Activated T-helper 1 cell treated with anti-CD3 and anti-CD28 coated beads, Interleukin-12 subunit alpha, Interleukin-12 subunit beta, Interleukin-2, Interleukin-4 antibody, amounts not matched to agents 30 ng/mL and 10 ng/mL and 1 ng/mL, durations not matched to agents 14 hours and 24 hours and 36 hours (primary cell): ENCODE measurements at regions of chr11 and their contacts with region 1.

Region 1: DNA sequence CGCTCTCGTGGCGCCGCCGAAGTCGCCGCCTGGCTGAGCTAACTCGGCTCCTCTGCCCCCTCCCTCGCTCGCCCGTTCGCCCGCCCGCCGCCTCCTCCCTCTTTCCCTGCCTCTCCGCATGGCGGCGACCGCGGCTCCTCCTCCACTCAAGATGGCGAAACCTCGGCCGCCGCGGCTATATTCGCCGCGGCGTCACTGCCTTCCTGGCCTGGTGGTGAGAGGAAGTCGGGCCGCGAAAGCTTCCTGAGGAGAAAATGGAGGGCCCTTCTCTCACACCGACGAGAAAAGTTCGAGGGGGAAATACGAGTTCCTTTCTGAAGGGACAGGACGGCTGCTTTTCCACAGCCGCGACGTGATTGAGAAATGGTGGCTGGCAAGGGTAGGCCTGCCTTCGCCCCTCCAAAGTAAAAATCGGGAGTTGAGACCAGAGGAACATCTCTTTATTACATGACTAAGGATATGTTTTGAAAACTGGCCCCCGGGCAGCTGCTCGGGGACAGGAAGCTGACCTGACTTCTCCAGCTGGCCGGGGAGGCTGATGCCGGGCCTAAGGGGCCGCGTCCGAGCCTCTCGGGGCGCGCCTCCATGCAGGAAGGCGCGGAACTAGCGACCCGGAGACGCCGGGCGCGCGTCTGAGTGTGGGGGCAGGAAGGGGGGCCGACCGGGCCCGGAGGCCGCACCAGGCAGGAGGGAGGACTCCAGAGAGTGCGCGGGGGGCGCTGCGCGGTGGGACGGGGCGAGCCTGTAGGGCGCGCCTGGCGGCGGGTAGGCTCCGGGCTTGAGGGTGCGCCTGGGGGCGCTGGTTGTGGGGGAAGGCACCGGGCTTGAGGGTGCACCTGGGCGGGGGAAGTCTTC is at the start of gene DDX6:
- DNase-seq: peak; percentile 85
- H3K4me3 Mint-ChIP-seq: peak within 1 kb of the TSS; percentile 98
- H3K27ac Mint-ChIP-seq: peak within 1 kb of the TSS; percentile 99
- H3K4me1 Mint-ChIP-seq: peaks cover 29% of the 10 kb centered on the region
- H3K27me3 Mint-ChIP-seq: no peaks in the 10 kb centered on the region
- total RNA-seq, gene DDX6: 110 and 112 TPM in 2 replicates

Region 2: DNA sequence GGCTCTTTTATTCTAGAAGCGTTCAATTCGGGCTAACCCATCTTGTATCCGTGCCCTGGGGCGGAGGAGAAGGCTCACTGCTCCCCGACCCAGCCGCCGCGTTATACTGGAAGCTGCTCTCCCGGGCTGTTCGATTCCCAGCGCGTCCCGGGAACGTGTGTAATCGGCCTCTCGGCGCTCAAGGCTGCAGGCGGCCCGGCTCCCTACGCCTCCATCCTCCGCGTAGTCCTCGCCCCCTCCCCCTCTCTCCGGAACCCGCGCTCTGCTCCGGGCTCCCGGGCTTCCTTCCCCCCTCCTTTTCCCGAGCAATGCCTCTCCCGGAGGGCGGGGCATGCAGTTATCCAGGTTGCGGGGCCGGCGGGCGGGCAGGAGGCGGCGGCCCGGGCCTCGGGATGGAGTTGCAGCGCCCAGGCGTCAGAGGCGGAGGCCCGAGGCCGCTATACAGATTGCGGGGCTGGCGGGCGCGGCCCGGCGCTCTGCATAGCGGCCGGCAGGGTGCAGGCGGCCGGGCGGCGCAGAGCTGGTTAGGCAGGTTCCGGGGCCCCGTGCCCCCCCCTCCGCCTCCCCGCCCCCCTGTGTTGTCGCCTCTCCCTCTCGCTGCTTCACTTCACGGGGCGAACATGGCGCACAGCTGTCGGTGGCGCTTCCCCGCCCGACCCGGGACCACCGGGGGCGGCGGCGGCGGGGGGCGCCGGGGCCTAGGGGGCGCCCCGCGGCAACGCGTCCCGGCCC is 355.3 kb before region 1 on chr11 and contains the start of gene KMT2A:
- intact Hi-C with region 1: loop called (anchors 5 kb)
- DNase-seq: peak; percentile 92
- H3K4me3 Mint-ChIP-seq: peak within 1 kb of the TSS; percentile 91
- H3K27ac Mint-ChIP-seq: peak within 1 kb of the TSS; percentile 89
- H3K4me1 Mint-ChIP-seq: peaks cover 45% of the 10 kb centered on the region
- H3K27me3 Mint-ChIP-seq: peaks cover 3% of the 10 kb centered on the region
- total RNA-seq, gene KMT2A: 78.4 and 87.8 TPM in 2 replicates

Region 3: DNA sequence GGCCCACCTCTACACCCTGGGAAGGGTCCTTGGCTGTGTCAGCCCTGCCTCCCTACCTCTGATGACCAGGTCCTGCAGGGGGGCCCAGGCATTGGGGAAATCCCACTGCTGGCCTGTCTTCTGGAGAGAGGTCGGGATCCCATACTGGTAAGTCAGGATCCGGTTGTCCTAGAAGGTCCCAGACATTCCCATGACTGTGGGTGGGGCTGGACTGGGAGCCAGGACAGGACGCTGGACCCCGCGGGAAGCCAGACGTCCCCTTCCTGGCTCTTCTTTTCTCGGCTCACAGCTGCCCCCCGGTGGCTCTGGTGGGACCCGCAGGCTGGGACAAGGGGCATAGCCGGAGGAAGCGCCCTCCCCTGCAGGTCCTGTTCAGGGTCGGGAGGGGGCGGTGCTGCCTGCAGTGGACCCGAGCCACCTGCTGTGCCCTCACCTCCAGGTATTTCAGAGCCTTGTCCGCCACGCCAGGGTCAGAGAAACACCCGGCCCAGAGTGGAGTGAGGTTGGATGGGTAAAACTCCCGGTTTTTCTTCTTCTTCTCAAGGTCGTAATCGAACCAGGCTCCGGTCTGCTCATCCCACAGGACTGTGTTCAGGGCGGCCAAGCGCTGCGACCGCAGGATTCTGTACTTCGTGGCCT is 131.9 kb before region 1 on chr11:
- intact Hi-C with region 1: no loop called
- DNase-seq: peak; percentile 74
- H3K4me3 Mint-ChIP-seq: no peak overlapping the region
- H3K27ac Mint-ChIP-seq: no peak overlapping the region
- H3K4me1 Mint-ChIP-seq: no peaks in the 10 kb centered on the region
- H3K27me3 Mint-ChIP-seq: peaks cover 9% of the 10 kb centered on the region

Region 4: GRCh38 chr11:118689851-118690552 is 101.3 kb before region 1 on chr11:
- intact Hi-C with region 1: loop called (anchors 2 kb)
- DNase-seq: peak; percentile 72
- H3K4me3 Mint-ChIP-seq: peak overlapping the region; percentile 60
- H3K27ac Mint-ChIP-seq: peak overlapping the region; percentile 52
- H3K4me1 Mint-ChIP-seq: peaks cover 36% of the 10 kb centered on the region
- H3K27me3 Mint-ChIP-seq: peaks cover 10% of the 10 kb centered on the region

Region 5: GRCh38 chr11:118870396-118871345 is 79.3 kb after region 1 on chr11:
- intact Hi-C with region 1: loop called (anchors 1 kb)
- DNase-seq: no peak
- H3K4me3 Mint-ChIP-seq: peak overlapping the region; percentile 75
- H3K27ac Mint-ChIP-seq: peak overlapping the region; percentile 96
- H3K4me1 Mint-ChIP-seq: peaks cover 51% of the 10 kb centered on the region
- H3K27me3 Mint-ChIP-seq: no peaks in the 10 kb centered on the region

Region 6: DNA sequence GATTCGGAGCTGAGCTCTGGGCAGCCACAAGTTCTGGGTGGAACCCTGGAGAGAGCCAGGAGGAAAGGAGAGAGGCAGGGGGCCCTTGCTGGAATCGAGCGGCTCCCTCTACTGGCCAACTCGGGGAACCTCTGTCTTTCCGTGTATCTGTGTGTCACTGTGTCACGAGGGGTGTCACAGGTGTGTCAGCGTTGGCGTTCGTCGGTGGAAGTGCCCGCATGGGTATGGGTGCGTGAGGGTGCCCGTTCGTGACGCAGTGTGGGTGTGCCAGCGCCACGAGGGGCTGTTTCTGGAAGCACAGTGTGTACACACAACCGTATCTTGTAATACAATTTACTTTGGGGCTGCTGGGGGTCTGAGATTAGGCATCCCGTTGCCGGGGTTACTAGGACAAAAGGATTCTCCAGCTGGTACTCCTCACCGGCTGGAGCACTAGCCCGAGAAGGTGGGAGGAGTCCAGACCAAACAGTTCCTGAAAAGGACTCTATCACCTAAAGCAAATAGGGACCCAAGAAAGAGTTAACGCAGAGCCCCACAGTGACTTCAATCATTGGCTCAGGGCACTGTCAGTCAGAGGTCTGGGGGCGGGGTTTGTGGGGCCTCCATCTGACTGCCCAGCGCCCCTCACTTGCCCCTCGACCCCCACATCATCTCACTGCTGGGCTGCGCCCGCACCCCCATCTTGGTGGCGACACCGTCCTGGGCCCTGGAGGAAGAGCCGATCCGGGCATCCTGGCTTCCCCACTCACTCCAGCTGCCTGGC is 137.0 kb after region 1 on chr11:
- intact Hi-C with region 1: loop called (anchors 1 kb)
- DNase-seq: peak; percentile 85
- H3K4me3 Mint-ChIP-seq: peak overlapping the region; percentile 93
- H3K27ac Mint-ChIP-seq: peak overlapping the region; percentile 95
- H3K4me1 Mint-ChIP-seq: peaks cover 53% of the 10 kb centered on the region
- H3K27me3 Mint-ChIP-seq: peaks cover 3% of the 10 kb centered on the region

Region 7: DNA sequence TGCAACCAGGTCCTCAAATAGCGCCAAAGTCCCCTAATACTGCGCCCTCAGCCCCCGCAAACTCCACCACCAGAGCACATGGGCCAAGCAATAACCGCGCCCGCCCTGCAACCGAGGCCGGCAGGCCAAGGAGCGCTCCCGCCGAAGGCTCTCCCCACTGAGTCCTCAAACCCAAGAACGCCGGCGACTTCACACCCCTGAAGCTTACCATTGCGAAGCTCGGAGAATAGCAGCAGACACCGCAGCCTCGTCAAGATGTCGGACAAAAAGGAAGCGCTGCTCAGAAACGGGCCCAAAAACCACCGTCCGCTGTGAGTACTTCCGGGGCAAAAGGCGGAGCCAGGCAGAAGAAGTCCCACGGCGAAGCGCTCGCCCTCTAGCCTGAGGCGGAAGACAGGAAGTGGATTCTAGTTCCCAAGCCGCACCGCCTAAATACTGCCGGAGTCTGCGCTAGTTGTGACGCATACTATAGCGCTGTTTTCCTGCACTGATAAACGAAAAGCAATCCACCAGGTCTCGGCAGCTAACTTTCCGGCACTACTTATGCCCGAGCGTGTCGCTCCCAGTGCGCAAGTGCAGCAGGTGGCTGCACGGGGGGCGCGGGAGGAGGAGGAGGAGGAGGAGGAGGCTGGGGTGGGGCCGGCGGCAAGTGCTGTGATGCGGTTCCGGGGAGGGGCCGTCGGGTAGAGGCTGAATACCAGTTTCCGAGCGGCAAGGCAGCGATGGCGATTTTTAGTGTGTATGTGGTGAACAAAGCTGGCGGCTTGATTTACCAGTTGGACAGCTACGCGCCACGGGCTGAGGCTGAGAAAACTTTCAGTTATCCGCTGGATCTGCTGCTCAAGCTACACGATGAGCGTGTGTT is 227.0 kb after region 1 on chr11 and contains the starts of genes RPS25 and TRAPPC4:
- intact Hi-C with region 1: loop called (anchors 1 kb)
- DNase-seq: peak; percentile 92
- H3K4me3 Mint-ChIP-seq: peak within 1 kb of the TSS; percentile 99
- H3K27ac Mint-ChIP-seq: peak within 1 kb of the TSS; percentile 100
- H3K4me1 Mint-ChIP-seq: peaks cover 42% of the 10 kb centered on the region
- H3K27me3 Mint-ChIP-seq: no peaks in the 10 kb centered on the region
- total RNA-seq, gene RPS25: 1,440 and 1,455 TPM in 2 replicates
- total RNA-seq, gene TRAPPC4: 141 and 142 TPM in 2 replicates